ENCODE measurements at regions of chr7 and their contacts with region 1.

Region 1: GRCh38 chr7:4725014-4725849 is 43.1 kb downstream of the FOXK1 start:
- DNase-seq: peak; percentile 81
- ATAC-seq: peak; percentile 88
- H3K4me3 Mint-ChIP-seq: peak overlapping the region; percentile 90
- H3K27ac Mint-ChIP-seq: peak overlapping the region; percentile 88
- H3K4me1 Mint-ChIP-seq: peaks cover 19% of the 10 kb centered on the region
- H3K27me3 Mint-ChIP-seq: no peaks in the 10 kb centered on the region

Region 2: DNA sequence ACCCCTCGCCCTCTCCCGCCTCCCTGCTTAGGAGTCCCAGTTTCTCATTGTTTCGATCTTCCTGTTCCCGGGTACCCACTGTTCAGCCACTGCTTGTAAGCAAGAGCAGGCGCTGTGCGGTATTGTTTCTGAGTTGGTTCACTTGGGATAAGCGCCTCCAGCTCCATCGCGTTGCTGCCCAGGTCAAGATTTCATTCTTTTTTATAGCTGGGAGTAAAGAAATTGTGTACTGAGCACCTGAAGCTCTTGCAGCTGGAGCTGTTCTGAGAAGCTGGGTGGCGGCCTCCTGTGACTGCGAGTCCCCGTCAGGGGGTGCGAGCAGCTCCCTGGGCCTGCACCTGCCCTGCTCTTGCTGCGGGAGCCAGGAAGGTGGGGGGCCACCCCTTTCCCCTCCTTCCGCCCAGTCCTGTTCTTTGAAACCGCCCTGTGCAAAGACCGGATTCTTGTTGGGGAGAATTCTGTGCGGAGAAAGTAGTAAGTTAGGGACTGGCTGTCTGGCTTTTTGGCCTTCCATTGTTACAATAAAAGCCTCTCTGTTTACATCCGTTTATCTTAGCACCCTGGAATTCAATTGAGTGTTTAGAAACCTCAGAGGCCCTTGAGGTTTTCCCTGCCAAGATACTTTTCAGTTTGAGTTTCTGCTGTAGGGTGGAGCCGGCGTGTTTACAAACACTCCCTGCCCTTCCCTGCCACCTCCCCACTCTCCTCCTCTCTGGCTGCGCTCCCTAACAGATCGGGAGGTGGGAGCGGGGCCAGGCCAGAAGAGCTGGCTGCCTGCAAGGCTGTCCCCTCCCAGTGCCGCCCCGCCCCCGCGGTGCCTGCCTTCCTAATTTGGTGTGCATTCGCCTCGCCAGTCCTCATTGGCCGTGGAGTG is 19.4 kb after region 1 on chr7:
- CTCF ChIA-PET with region 1: interaction called, 12 read pairs
- DNase-seq: peak; percentile 86
- ATAC-seq: peak; percentile 81
- H3K4me3 Mint-ChIP-seq: peak overlapping the region; percentile 70
- H3K27ac Mint-ChIP-seq: peak overlapping the region; percentile 90
- H3K4me1 Mint-ChIP-seq: peaks cover 37% of the 10 kb centered on the region
- H3K27me3 Mint-ChIP-seq: no peaks in the 10 kb centered on the region